Sciatic nerve (tissue), 2 donors: ENCODE measurements at regions of chr6 and their contacts with region 1.

Region 1: GRCh38 chr6:155248008-155249001 is 15.5 kb upstream of the CLDN20 start:
- DNase-seq: peak; percentile 75
- ATAC-seq: peak; percentile 87

Region 2: GRCh38 chr6:155181498-155181897 is 66.8 kb before region 1 on chr6:
- intact Hi-C with region 1: loop called (anchors 5 kb)
- DNase-seq: no peak
- ATAC-seq: no peak

Region 3: GRCh38 chr6:155195903-155196302 is 52.4 kb before region 1 on chr6:
- intact Hi-C with region 1: no loop called
- DNase-seq: no peak
- ATAC-seq: no peak